GM12878 (cell line): ENCODE measurements at regions of chr1 and their contacts with region 1.

Region 1: DNA sequence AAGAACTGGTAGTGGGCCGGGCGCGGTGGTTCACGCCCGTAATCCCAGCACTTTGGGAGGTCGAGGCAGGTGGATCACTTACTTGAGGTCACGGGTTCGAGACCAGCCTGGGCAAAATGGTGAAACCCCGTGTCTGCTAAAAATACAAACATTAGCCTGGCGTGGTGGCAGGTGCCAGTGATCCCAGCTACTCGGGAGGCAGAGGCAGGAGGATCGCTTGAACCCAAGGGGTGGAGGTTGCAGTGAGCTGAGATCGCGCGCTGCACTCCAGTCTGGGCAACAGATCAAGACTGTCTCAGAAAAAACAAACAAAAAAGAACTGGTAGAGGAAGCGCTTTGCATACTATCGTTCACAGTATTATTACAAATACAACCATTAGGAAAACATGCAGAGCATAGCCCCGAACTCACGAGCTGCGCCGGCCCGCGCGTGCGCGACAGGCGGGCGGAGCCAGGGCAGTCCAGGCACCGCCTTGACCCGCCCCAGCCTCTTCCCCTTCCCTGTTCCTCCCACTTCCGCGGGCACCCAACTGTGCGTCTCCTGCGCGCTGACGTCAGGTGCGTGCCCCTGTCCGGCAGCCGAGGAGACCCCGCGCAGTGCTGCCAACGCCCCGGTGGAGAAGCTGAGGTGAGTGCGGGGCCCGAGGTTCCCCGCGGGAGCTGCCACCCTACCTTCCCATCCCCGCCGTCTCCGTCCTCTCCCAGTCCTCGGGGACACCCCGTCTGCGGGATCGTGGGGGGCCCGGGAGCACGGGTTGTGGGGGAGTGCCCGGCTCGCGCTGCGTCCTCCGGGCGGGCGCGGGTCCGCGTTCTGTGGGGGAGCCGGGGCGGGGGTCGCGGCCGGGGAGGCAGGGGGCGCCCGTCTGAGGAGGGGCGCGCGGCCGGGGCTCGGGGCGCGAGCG is at the start of gene CDC42:
- DNase-seq: peak; percentile 83
- ATAC-seq: peak; percentile 89
- H3K4me3 ChIP-seq: peak within 1 kb of the TSS; percentile 98
- H3K27ac ChIP-seq: peak within 1 kb of the TSS; percentile 90
- H3K4me1 ChIP-seq: peaks cover 15% of the 10 kb centered on the region
- H3K27me3 ChIP-seq: no peaks in the 10 kb centered on the region
- CTCF ChIP-seq: no peak
- EP300 ChIP-seq: no peak; a peak in 1 of 4 replicates
- POLR2A ChIP-seq: peak; percentile 99
- RAD21 ChIP-seq: no peak
- polyA plus RNA-seq, gene CDC42: 286 to 442 TPM

Region 2: DNA sequence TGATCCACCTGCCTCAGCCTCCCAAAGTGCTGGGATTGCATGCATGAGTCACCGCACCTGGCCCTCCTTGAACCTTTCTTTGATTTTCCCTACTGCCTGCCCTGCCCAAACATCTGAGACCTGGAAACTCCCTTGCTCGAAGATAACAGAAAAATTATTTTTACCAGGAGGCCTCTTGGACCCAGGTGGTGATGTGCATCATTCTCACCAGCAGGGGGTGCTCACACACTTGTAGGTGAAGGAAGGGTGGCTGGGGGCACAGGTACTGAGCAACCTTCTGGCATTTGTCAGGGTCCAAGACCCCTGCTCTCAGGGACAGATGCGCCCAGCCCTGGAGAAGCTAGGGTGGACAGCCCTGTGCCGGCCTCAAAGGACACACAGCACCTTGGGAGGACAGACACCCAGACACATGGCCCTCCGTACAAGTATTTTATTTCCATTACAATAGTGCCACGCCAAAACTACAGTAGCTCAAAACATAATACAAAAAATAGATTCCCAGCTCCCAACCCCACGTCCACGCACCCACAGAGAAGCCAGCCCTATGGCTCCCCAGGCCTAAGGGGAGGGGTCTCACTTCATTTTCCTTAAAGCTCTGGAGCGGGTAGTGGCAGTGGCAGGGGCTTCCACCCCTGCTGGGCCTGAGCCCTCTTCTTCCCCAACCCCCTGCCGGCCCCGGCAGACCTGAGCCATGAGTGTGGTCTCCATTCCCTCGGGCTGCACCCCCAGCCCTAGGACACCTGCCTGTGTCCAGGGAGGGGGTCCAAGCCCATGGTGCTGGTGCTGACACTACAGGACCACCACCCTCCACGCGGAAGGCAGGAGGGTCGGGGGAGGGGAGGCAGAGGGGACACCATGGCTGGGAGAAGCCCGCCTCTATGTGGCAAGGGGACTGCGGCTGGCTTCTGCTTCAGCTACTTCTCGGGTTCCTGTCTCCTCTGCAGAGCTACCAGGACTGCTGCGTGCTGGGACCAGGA is 835.2 kb before region 1 on chr1:
- CTCF ChIA-PET with region 1: no interaction called
- POLR2A ChIA-PET with region 1: no interaction called
- RAD21 ChIA-PET with region 1: no interaction called
- SMC1A ChIA-PET with region 1: no interaction called
- in situ Hi-C with region 1: no loop called
- intact Hi-C with region 1: no loop called
- DNase-seq: no peak
- ATAC-seq: peak; percentile 87
- H3K4me3 ChIP-seq: no peak overlapping the region
- H3K27ac ChIP-seq: no peak overlapping the region
- H3K4me1 ChIP-seq: peaks cover 4% of the 10 kb centered on the region
- H3K27me3 ChIP-seq: no peaks in the 10 kb centered on the region
- CTCF ChIP-seq: peak; percentile 63 to 84 (median 80)
- EP300 ChIP-seq: no peak
- POLR2A ChIP-seq: 0 out of 2 replicates have a peak, but pooled peaks have one; percentile 25
- RAD21 ChIP-seq: peak; percentile 59

Region 3: DNA sequence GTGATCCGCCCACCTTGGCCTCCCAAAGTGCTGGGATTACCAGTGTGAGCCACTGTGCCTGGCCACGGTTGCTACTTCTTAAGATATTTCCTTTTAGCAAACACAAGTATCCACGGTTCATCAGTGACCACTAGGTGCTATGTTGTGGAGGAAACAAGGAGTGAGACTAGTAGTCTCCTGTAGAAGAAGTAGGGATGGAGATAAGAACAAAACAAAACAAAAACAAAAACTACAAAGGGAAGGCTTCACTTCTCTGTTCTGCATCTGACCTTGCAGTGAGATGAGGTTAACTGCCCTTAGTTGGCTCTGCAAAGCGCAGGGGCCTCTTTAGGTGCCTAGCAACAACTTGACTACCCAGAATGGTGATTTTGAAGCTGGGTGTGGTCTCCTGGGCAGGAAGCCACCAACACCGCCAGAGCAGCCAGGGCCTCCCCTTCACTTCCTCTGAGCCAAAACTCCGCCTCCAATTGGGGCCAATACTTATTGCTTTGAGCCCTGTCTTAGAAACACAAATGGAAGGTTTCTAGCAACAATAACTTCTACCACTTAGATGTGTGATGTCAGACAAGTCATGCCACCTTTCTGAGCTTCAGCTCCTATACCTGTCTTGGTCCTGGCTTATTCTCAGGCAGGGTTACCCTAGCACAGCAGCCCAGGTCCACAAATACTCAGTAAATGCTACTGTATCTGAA is 12.6 kb before region 1 on chr1:
- CTCF ChIA-PET with region 1: interaction called, 5 read pairs
- POLR2A ChIA-PET with region 1: interaction called, 59 read pairs
- RAD21 ChIA-PET with region 1: interaction called, 9 read pairs
- SMC1A ChIA-PET with region 1: interaction called, 11 read pairs
- in situ Hi-C with region 1: no loop called
- intact Hi-C with region 1: no loop called
- DNase-seq: peak; percentile 97
- ATAC-seq: peak; percentile 100
- H3K4me3 ChIP-seq: peak overlapping the region; percentile 33; the same call in 1 of the 2 replicates
- H3K27ac ChIP-seq: peak overlapping the region; percentile 94
- H3K4me1 ChIP-seq: peaks cover 25% of the 10 kb centered on the region
- H3K27me3 ChIP-seq: no peaks in the 10 kb centered on the region
- CTCF ChIP-seq: 0 out of 6 replicates have a peak, but pooled peaks of 2 of the 3 experiments have one; percentile 0 to 24
- EP300 ChIP-seq: no peak
- POLR2A ChIP-seq: peak; percentile 60
- RAD21 ChIP-seq: 0 out of 2 replicates have a peak, but pooled peaks have one; percentile 8

Region 4: GRCh38 chr1:22064751-22065402 is 12.5 kb after region 1 on chr1:
- CTCF ChIA-PET with region 1: interaction called, 3 read pairs
- POLR2A ChIA-PET with region 1: interaction called, 6 read pairs
- RAD21 ChIA-PET with region 1: interaction called, 7 read pairs
- SMC1A ChIA-PET with region 1: interaction called, 5 read pairs
- in situ Hi-C with region 1: no loop called
- intact Hi-C with region 1: loop called (anchors 2 kb)
- DNase-seq: no peak
- ATAC-seq: no peak
- H3K4me3 ChIP-seq: no peak overlapping the region
- H3K27ac ChIP-seq: no peak overlapping the region
- H3K4me1 ChIP-seq: peaks cover 13% of the 10 kb centered on the region; the same call in 1 of the 2 replicates
- H3K27me3 ChIP-seq: no peaks in the 10 kb centered on the region
- CTCF ChIP-seq: no peak
- EP300 ChIP-seq: no peak
- POLR2A ChIP-seq: no peak
- RAD21 ChIP-seq: no peak